Left cardiac atrium (tissue), 4 donors: ENCODE measurements at regions of chr7 and their contacts with region 1.

Region 1: DNA sequence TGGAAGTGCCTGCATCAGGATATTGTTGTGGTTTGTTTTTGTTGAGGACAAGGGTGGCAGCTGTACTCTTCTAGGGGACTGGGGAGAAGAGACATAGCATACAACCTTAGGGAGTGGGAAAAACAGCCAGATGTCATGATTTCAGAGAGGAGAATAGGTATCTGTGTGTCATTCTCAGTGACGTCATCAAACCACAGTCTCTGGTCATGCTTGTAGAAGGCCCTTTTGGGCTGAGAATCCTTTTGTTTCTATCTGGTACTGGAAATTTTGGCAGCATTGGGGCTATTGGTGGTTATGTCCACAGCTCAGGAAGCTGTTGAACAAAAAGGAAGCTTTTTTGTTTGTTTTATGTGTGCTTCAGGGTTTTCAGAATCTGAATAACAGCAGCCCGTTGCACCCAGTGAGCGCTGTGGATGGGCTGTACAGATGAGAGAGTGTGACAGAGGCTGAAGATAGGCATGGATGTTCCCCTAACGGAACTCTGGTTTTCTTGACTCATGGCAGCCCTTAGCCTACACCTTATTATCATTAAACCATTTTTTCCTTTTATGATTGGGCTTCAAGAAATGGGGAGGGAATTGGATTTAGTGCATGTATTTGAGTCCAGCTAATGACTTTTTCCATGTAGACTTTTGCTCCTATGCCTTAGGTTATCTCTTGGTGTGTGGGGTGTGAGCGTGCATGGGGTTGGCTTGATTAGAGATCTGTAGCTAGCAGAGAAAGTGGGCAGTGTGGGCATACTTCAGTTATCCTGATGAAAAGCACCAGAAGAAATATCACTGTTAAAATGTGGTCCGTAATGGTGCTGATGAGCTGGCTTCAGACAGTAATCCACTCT is 65.7 kb downstream of the SND1 start:
- DNase-seq: no peak
- ATAC-seq: no peak

Region 2: GRCh38 chr7:128020159-128020558 is 302.4 kb after region 1 on chr7:
- intact Hi-C with region 1: loop called in 1 of 2 experiments (anchors 10 kb)
- DNase-seq: no peak
- ATAC-seq: no peak